ENCODE measurements at regions of chr1 and their contacts with region 1.

Region 1: DNA sequence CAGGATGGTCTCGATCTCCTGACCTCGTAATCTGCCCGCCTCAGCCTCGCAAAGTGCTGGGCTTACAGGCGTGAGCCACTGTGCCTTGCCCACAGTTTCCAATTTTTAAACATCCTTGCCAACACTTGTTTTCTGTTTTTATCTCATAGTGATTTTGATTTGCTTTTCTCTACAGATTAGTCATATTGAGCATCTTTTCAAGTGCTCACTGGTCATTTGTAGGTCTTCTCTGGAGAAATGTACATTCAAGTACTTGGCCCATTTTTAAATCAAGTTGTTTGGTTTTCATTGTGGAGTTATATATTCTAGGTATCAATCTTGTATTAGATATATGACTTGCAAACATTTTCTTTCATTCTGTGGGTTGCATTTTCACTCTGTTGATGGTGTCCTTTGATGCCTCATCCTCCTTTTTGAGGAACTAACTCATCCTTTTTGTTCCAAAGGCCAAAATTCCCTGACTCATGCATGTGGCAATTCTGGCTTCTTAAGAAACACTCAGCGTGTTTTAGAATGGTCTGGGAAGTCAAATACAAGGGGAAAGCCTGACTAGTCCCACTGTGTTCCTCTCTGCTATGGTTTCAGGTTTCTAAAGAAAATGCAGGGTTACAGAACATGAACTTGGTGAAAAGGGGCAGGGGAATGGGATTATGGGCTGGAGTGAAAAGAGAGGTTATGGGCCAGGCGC is 37.3 kb downstream of the PTAFR start:
- DNase-seq: no peak
- ATAC-seq: no peak
- H3K4me3 ChIP-seq: no peak overlapping the region
- H3K27ac ChIP-seq: no peak overlapping the region
- H3K4me1 ChIP-seq: no peaks in the 10 kb centered on the region
- H3K27me3 ChIP-seq: no peaks in the 10 kb centered on the region
- CTCF ChIP-seq: no peak

Region 2: DNA sequence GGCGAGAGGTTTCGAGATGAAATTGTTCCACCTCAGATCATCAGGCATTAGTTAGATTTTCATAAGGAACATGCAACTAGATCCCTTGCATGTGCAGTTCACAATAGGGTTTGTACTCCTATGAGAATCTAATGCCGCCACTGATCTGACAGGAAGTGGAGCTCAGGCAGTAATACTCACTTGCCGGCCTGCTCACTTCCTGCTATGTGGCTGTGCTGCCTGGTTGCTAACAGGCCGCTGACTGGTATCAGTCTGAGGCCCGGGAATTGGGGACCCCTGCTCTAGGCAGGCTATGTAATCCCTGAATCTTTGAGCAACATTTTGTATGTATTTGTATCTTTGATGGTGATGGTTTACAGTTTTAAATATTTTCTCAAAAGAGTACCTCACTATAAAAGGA is 146.9 kb before region 1 on chr1:
- CTCF ChIA-PET with region 1: no interaction called
- POLR2A ChIA-PET with region 1: no interaction called
- in situ Hi-C with region 1: no loop called
- intact Hi-C with region 1: no loop called
- DNase-seq: no peak
- ATAC-seq: no peak
- H3K4me3 ChIP-seq: no peak overlapping the region
- H3K27ac ChIP-seq: no peak overlapping the region
- H3K4me1 ChIP-seq: no peaks in the 10 kb centered on the region
- H3K27me3 ChIP-seq: no peaks in the 10 kb centered on the region
- CTCF ChIP-seq: no peak

Region 3: GRCh38 chr1:28156821-28157220 is 17.7 kb after region 1 on chr1:
- CTCF ChIA-PET with region 1: no interaction called
- POLR2A ChIA-PET with region 1: interaction called, 17 read pairs
- in situ Hi-C with region 1: no loop called
- intact Hi-C with region 1: no loop called
- DNase-seq: no peak
- ATAC-seq: no peak
- H3K4me3 ChIP-seq: no peak overlapping the region
- H3K27ac ChIP-seq: no peak overlapping the region
- H3K4me1 ChIP-seq: peaks cover 6% of the 10 kb centered on the region; the same call in 1 of the 2 replicates
- H3K27me3 ChIP-seq: no peaks in the 10 kb centered on the region
- CTCF ChIP-seq: no peak

Region 4: GRCh38 chr1:28180306-28181305 is 41.4 kb after region 1 on chr1:
- CTCF ChIA-PET with region 1: no interaction called
- POLR2A ChIA-PET with region 1: no interaction called
- in situ Hi-C with region 1: no loop called
- intact Hi-C with region 1: no loop called
- DNase-seq: no peak
- ATAC-seq: no peak
- H3K4me3 ChIP-seq: no peak overlapping the region
- H3K27ac ChIP-seq: no peak overlapping the region
- H3K4me1 ChIP-seq: no peaks in the 10 kb centered on the region
- H3K27me3 ChIP-seq: no peaks in the 10 kb centered on the region
- CTCF ChIP-seq: no peak

Measured in Panc1 (cell line).